MCF 10A (cell line): ENCODE measurements at regions of chr1 and their contacts with region 1.

Region 1: GRCh38 chr1:232127190-232127589 is 500.6 kb downstream of the DISC1 start:
- DNase-seq: peak; percentile 88
- H3K4me3 Mint-ChIP-seq: no peak overlapping the region
- H3K27ac Mint-ChIP-seq: peak overlapping the region; percentile 32
- H3K4me1 Mint-ChIP-seq: peaks cover 51% of the 10 kb centered on the region
- H3K27me3 Mint-ChIP-seq: no peaks in the 10 kb centered on the region
- CTCF ChIP-seq: no peak

Region 2: GRCh38 chr1:232142403-232143314 is 15.5 kb after region 1 on chr1:
- CTCF ChIA-PET with region 1: interaction called, 3 read pairs
- POLR2A ChIA-PET with region 1: interaction called, 31 read pairs
- intact Hi-C with region 1: no loop called
- DNase-seq: peak; percentile 98
- H3K4me3 Mint-ChIP-seq: peak overlapping the region; percentile 36
- H3K27ac Mint-ChIP-seq: peak overlapping the region; percentile 82
- H3K4me1 Mint-ChIP-seq: peaks cover 28% of the 10 kb centered on the region
- H3K27me3 Mint-ChIP-seq: no peaks in the 10 kb centered on the region
- CTCF ChIP-seq: no peak

Region 3: DNA sequence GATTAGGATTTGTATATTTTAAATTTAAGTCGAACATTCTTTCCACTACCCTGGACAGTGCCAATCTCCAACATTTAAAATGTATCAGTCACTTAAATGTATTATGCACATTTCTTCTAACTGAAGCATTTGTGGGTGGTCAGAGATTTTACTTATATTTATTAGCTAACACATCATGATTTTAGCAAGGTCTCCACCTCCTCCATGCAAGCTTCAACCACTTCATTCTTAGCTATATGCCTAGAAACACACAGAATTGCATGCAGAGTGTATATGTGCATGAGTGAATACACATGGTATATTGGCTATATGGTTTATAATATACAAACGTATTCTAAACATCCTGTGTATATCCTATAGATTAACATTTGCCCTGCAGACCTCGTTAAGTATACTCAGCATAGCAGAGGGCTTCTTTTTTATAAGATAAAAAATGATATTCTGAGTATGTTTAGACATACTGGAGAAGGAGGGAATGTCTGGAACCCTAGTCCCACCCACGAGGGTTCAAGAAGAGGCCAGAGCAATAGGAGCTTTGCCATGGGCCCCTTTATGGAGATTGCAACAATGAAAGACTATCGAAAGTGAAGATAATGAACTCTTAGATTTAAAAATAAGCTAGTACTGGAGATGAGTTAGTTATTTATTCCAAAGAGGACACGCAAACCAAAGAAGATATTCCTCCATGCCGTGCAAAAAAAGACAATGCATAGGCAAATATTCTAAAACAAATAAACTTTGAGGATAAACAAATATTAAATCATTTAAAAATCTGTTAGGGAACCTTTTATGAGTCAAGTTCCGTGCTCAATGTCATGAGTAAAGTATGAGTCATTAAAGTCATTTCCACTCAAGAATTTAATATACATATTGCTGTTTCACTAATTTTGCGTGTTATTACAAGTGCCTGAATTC is 22.4 kb after region 1 on chr1:
- CTCF ChIA-PET with region 1: interaction called, 3 read pairs
- POLR2A ChIA-PET with region 1: interaction called, 12 read pairs
- intact Hi-C with region 1: no loop called
- DNase-seq: peak; percentile 72
- H3K4me3 Mint-ChIP-seq: no peak overlapping the region
- H3K27ac Mint-ChIP-seq: peak overlapping the region; percentile 52
- H3K4me1 Mint-ChIP-seq: peaks cover 14% of the 10 kb centered on the region
- H3K27me3 Mint-ChIP-seq: no peaks in the 10 kb centered on the region
- CTCF ChIP-seq: no peak

Region 4: GRCh38 chr1:232211149-232211548 is 84.0 kb after region 1 on chr1:
- CTCF ChIA-PET with region 1: no interaction called
- POLR2A ChIA-PET with region 1: no interaction called
- intact Hi-C with region 1: no loop called
- DNase-seq: peak; percentile 44
- H3K4me3 Mint-ChIP-seq: no peak overlapping the region
- H3K27ac Mint-ChIP-seq: no peak overlapping the region
- H3K4me1 Mint-ChIP-seq: no peaks in the 10 kb centered on the region
- H3K27me3 Mint-ChIP-seq: no peaks in the 10 kb centered on the region
- CTCF ChIP-seq: peak; percentile 63